ENCODE measurements at regions of chr1 and their contacts with region 1.

Region 1: GRCh38 chr1:26874896-26875295 is 11.9 kb downstream of the SFN start:
- DNase-seq: no peak
- H3K4me3 ChIP-seq: no peak overlapping the region
- H3K27ac ChIP-seq: no peak overlapping the region
- H3K4me1 ChIP-seq: peaks cover 0 to 20% (median 6%) of the 10 kb centered on the region in 4 donors
- H3K27me3 ChIP-seq: no peaks in the 10 kb centered on the region
- CTCF ChIP-seq: no peak
- EP300 ChIP-seq: no peak
- POLR2A ChIP-seq: no peak

Region 2: GRCh38 chr1:26560403-26560780 is 314.5 kb before region 1 on chr1:
- in situ Hi-C with region 1: no loop called
- intact Hi-C with region 1: no loop called
- DNase-seq: no peak
- H3K4me3 ChIP-seq: no peak overlapping the region
- H3K27ac ChIP-seq: no peak overlapping the region
- H3K4me1 ChIP-seq: no peaks in the 10 kb centered on the region
- H3K27me3 ChIP-seq: no peaks in the 10 kb centered on the region
- CTCF ChIP-seq: no peak
- EP300 ChIP-seq: no peak
- POLR2A ChIP-seq: no peak

Region 3: GRCh38 chr1:26854906-26855305 is 20.0 kb before region 1 on chr1:
- in situ Hi-C with region 1: no loop called
- intact Hi-C with region 1: loop called (anchors 2 kb)
- DNase-seq: peak; percentile 85
- H3K4me3 ChIP-seq: no peak overlapping the region
- H3K27ac ChIP-seq: peak overlapping the region; percentile 32 to 59 (median 50)
- H3K4me1 ChIP-seq: peaks cover 13 to 35% (median 22%) of the 10 kb centered on the region in 4 donors
- H3K27me3 ChIP-seq: no peaks in the 10 kb centered on the region
- CTCF ChIP-seq: no peak
- EP300 ChIP-seq: no peak
- POLR2A ChIP-seq: peak; percentile 17

Region 4: DNA sequence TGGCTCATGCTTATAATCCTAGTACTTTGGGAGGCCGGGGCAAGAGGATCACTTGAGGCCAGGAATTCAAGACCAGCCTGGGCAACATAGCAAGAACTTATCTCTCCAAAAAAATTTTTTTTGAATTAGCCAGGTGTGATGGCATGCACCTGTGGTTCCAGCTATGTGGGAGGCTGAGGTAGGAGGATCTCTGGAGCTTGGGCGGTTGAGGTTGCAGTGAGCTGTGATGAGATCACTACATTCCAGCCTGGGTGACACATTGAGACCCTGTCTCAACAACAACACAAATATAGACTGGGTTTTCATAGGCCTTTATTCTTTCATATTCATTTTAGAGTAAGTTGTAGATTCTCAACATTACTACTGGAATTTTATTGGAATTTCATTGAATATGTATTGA is 1466.7 kb after region 1 on chr1:
- in situ Hi-C with region 1: no loop called
- intact Hi-C with region 1: no loop called
- DNase-seq: no peak
- H3K4me3 ChIP-seq: no peak overlapping the region
- H3K27ac ChIP-seq: no peak overlapping the region
- H3K4me1 ChIP-seq: peaks cover 0 to 3% (median 0%) of the 10 kb centered on the region in 4 donors
- H3K27me3 ChIP-seq: no peaks in the 10 kb centered on the region
- CTCF ChIP-seq: no peak
- EP300 ChIP-seq: no peak
- POLR2A ChIP-seq: no peak